ENCODE measurements at regions of chr3 and their contacts with region 1.

Region 1: GRCh38 chr3:181709537-181710279 is 2.0 kb upstream of the SOX2 start:
- DNase-seq: peak; percentile 40
- H3K4me3 ChIP-seq: peak overlapping the region in 2 of 3 experiments; percentile 26 to 33
- H3K27ac ChIP-seq: no peak overlapping the region
- H3K4me1 ChIP-seq: peaks cover 15% of the 10 kb centered on the region
- H3K27me3 ChIP-seq: peaks cover 58% of the 10 kb centered on the region
- CTCF ChIP-seq: peak; percentile 53 to 66

Region 2: DNA sequence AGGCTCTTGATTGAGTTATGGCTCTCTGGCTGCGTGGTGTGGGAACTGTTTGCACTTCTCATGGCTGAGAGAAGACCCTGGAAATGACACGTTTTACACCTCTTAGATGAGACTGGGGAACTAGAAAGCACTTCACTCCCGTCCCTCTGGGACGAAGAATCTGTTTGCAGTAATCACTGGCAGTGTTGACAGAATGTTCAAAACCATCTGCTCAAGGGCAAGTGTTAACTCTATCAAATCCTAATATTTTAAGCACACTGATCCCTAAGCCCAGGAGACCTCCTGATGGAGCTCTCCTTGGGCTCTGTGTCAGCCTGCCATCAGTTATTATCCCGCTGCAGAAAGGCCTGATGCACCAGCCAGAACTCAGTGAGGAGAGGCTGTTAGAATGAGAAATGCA is 396.4 kb before region 1 on chr3:
- CTCF ChIA-PET with region 1: no interaction called
- dilution Hi-C with region 1: no loop called
- in situ Hi-C with region 1: no loop called
- intact Hi-C with region 1: no loop called
- DNase-seq: no peak
- H3K4me3 ChIP-seq: no peak overlapping the region
- H3K27ac ChIP-seq: no peak overlapping the region
- H3K4me1 ChIP-seq: no peaks in the 10 kb centered on the region
- H3K27me3 ChIP-seq: peaks cover 4% of the 10 kb centered on the region
- CTCF ChIP-seq: no peak

Region 3: GRCh38 chr3:181613813-181614212 is 95.9 kb before region 1 on chr3:
- CTCF ChIA-PET with region 1: no interaction called
- dilution Hi-C with region 1: no loop called
- in situ Hi-C with region 1: no loop called
- intact Hi-C with region 1: no loop called
- DNase-seq: no peak
- H3K4me3 ChIP-seq: no peak overlapping the region
- H3K27ac ChIP-seq: no peak overlapping the region
- H3K4me1 ChIP-seq: no peaks in the 10 kb centered on the region
- H3K27me3 ChIP-seq: no peaks in the 10 kb centered on the region
- CTCF ChIP-seq: no peak

Region 4: DNA sequence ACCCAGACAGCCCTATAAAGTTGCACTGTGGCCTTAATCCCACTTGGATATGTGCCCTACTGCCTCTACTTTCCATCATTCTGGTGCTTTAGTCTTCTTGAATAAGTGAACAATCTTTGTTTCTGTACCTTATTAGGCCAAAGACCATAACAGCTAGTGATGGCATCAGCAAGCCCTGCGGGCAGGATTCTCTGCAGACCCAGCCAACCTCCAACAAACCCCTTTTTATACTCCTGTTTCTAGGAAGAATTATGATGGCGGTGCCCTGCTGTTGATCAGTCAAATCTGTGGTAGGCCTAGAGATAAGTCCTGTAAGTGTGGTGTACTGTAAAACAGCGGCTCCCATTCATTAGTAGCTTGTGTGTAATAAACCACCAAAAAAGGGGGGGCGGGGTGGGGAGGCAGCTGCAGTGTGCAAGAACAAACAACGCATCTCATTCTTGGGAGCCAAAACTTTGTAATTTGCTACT is 42.5 kb after region 1 on chr3:
- CTCF ChIA-PET with region 1: no interaction called
- dilution Hi-C with region 1: no loop called
- in situ Hi-C with region 1: no loop called
- intact Hi-C with region 1: no loop called
- DNase-seq: peak; percentile 36
- H3K4me3 ChIP-seq: no peak overlapping the region
- H3K27ac ChIP-seq: no peak overlapping the region
- H3K4me1 ChIP-seq: no peaks in the 10 kb centered on the region
- H3K27me3 ChIP-seq: peaks cover 10% of the 10 kb centered on the region
- CTCF ChIP-seq: no peak

Region 5: DNA sequence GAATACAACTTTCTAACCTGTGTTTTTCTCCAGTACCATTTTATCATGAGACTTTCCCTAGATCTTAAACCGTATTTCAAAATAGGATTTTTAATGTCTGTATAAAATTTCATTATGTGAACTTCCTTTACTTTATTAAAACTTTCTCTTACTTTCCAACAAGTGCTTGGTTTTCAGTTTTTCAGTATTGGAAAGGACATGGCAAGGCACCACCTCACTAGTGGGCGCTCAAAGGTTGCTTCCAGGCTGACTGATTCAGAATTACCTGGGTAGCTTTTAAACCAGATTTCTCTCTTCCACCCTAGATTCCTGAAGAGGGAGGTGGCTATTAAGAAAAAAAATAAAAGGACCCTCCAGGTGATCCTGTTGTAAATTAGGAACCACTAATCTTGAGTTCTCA is 238.6 kb after region 1 on chr3:
- CTCF ChIA-PET with region 1: no interaction called
- dilution Hi-C with region 1: no loop called
- in situ Hi-C with region 1: no loop called
- intact Hi-C with region 1: loop called (anchors 5 kb)
- DNase-seq: peak; percentile 11
- H3K4me3 ChIP-seq: no peak overlapping the region
- H3K27ac ChIP-seq: no peak overlapping the region
- H3K4me1 ChIP-seq: no peaks in the 10 kb centered on the region
- H3K27me3 ChIP-seq: no peaks in the 10 kb centered on the region
- CTCF ChIP-seq: peak; percentile 47 to 92

Region 6: DNA sequence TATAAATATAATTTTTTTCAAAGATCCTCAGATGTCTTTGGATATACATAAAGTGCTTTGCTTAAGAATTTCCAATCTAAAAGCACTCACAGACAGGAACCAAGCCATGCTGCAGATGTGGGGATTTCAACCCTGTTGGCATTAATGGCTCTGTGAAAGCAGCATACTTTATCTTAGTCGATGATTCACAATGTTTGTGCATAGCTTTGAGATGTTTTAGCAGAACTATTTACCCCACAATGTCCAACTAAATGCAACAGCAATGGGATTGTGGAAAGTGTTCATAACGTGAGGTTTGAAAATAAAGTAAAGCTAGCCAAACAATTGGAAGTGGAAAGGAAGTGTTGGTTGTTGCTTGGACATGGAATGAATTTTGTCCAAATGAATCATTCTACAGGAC is 373.4 kb after region 1 on chr3:
- CTCF ChIA-PET with region 1: no interaction called
- dilution Hi-C with region 1: no loop called
- in situ Hi-C with region 1: no loop called
- intact Hi-C with region 1: no loop called
- DNase-seq: peak; percentile 27
- H3K4me3 ChIP-seq: no peak overlapping the region
- H3K27ac ChIP-seq: no peak overlapping the region
- H3K4me1 ChIP-seq: no peaks in the 10 kb centered on the region
- H3K27me3 ChIP-seq: no peaks in the 10 kb centered on the region
- CTCF ChIP-seq: no peak

Region 7: DNA sequence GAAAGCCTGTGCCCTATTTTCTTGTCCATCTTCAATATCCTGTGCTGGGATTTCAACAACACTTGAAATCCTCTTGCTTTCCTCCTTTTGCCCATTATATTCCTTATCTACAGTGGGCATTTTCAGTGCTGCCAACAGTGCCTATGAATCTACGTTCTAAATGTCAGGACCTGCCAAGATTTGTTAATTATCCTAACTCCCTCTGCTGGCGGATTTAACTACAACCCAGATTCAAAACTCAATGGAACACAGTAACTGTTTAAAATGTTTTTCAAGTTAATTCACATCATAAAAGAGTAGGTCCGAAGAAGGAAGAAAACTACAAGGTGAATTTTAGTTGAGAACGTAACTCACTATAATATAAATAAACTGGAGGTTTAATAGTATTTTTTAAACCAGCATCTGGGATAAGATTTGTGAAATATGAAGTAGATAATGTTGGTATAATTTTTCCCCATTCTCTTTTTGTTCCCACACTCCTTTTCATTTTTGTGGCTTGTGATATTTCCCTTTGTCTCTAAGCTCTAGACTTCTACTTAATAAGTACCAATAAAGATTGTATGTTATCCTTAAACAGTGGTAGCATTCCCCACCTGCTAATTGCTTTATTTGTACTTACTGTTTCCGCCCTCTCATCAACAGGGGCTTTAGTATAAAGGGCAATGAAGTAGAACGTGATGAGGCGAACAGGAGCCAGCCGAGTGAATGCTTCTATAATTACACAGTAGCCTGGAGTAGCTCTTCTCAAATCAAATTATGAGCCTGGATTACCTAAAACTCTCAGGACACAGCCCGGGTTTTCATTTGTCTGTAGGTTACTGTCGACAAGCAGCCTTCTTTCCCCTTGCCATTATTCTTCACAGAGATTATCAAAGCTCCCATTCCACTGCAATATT is 781.1 kb after region 1 on chr3:
- CTCF ChIA-PET with region 1: no interaction called
- dilution Hi-C with region 1: no loop called
- in situ Hi-C with region 1: no loop called
- intact Hi-C with region 1: loop called (anchors 1 kb)
- DNase-seq: peak; percentile 31
- H3K4me3 ChIP-seq: no peak overlapping the region
- H3K27ac ChIP-seq: no peak overlapping the region
- H3K4me1 ChIP-seq: no peaks in the 10 kb centered on the region
- H3K27me3 ChIP-seq: no peaks in the 10 kb centered on the region
- CTCF ChIP-seq: peak; percentile 52 to 63

Measured in mammary epithelial cell (primary cell).